PC-9 (cell line): ENCODE measurements at regions of chr2 and their contacts with region 1.

Region 1: GRCh38 chr2:68751397-68752339 is 17.1 kb downstream of the ARHGAP25 start:
- DNase-seq: peak; percentile 59 to 79
- H3K4me3 ChIP-seq: no peak overlapping the region
- H3K27ac ChIP-seq: no peak overlapping the region
- H3K4me1 ChIP-seq: no peaks in the 10 kb centered on the region
- H3K27me3 ChIP-seq: no peaks in the 10 kb centered on the region
- CTCF ChIP-seq: peak; percentile 85

Region 2: GRCh38 chr2:68709421-68709911 is 42.2 kb before region 1 on chr2:
- CTCF ChIA-PET with region 1: interaction called, 7 read pairs
- POLR2A ChIA-PET with region 1: no interaction called
- intact Hi-C with region 1: loop called (anchors 2 kb)
- DNase-seq: peak in 1 of 2 experiments; percentile 16
- H3K4me3 ChIP-seq: no peak overlapping the region
- H3K27ac ChIP-seq: no peak overlapping the region
- H3K4me1 ChIP-seq: no peaks in the 10 kb centered on the region
- H3K27me3 ChIP-seq: no peaks in the 10 kb centered on the region
- CTCF ChIP-seq: peak; percentile 74